Activated CD4-positive, alpha-beta T cell treated with anti-CD3 and anti-CD28 coated beads for 36 hours (primary cell): ENCODE measurements at regions of chr10 and their contacts with region 1.

Region 1: GRCh38 chr10:23314835-23315239 is 29.8 kb downstream of the C10orf67 start:
- DNase-seq: peak; percentile 63
- ATAC-seq: peak; percentile 36
- H3K4me3 Mint-ChIP-seq: no peak overlapping the region
- H3K27ac Mint-ChIP-seq: no peak overlapping the region
- H3K4me1 Mint-ChIP-seq: no peaks in the 10 kb centered on the region
- H3K27me3 Mint-ChIP-seq: no peaks in the 10 kb centered on the region

Region 2: GRCh38 chr10:23656735-23657134 is 341.9 kb after region 1 on chr10:
- CTCF ChIA-PET with region 1: interaction called, 4 read pairs
- POLR2A ChIA-PET with region 1: no interaction called
- intact Hi-C with region 1: loop called in 1 of 2 experiments (anchors 2 kb)
- DNase-seq: no peak
- ATAC-seq: no peak
- H3K4me3 Mint-ChIP-seq: no peak overlapping the region
- H3K27ac Mint-ChIP-seq: no peak overlapping the region
- H3K4me1 Mint-ChIP-seq: no peaks in the 10 kb centered on the region
- H3K27me3 Mint-ChIP-seq: peaks cover 7% of the 10 kb centered on the region

Region 3: DNA sequence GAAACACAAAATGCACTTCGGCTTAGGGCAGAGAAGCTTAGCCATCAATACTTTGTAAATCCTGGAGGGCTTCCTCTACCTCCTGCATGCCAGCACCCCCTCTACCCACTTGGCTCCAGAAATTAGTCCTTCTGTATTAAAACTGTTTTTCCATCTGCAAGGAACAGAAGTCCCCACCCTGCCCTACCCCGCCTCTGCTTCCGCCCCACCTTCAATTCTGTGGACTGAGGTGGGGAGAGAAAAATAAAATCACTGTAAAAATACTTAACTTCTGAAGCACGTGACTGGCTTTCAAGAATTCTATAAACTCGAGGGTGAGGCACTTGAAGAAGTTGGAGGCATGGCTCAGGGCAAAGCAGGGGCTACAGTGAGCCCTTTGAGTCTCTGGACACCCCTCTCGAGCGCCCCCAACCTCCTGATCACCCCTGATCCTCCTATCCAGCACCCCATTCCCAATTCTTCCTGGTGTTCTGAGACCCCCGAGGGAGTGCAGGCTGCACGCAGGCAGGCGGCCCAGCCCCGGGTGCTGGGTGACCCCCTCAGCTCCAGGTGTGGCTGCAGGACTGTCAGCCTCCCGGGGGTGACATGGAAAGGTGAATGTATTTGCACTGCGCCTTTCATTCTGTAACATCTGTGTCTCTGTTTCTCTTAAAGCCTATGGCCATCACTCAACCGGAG is 886.8 kb after region 1 on chr10:
- CTCF ChIA-PET with region 1: no interaction called
- POLR2A ChIA-PET with region 1: no interaction called
- intact Hi-C with region 1: loop called (anchors 2 to 10 kb)
- DNase-seq: no peak
- ATAC-seq: no peak
- H3K4me3 Mint-ChIP-seq: no peak overlapping the region
- H3K27ac Mint-ChIP-seq: no peak overlapping the region
- H3K4me1 Mint-ChIP-seq: peaks cover 8% of the 10 kb centered on the region
- H3K27me3 Mint-ChIP-seq: peaks cover 20% of the 10 kb centered on the region